Common myeloid progenitor, CD34-positive (primary cell): ENCODE measurements at regions of chr15 and their contacts with region 1.

Region 1: GRCh38 chr15:68192804-68193486 is 12.2 kb downstream of the CALML4 start:
- DNase-seq: no peak
- H3K4me3 ChIP-seq: no peak overlapping the region
- H3K27ac ChIP-seq: peak overlapping the region in 1 of 2 experiments; percentile 30
- H3K4me1 ChIP-seq: no peaks in the 10 kb centered on the region
- H3K27me3 ChIP-seq: no peaks in the 10 kb centered on the region

Region 2: DNA sequence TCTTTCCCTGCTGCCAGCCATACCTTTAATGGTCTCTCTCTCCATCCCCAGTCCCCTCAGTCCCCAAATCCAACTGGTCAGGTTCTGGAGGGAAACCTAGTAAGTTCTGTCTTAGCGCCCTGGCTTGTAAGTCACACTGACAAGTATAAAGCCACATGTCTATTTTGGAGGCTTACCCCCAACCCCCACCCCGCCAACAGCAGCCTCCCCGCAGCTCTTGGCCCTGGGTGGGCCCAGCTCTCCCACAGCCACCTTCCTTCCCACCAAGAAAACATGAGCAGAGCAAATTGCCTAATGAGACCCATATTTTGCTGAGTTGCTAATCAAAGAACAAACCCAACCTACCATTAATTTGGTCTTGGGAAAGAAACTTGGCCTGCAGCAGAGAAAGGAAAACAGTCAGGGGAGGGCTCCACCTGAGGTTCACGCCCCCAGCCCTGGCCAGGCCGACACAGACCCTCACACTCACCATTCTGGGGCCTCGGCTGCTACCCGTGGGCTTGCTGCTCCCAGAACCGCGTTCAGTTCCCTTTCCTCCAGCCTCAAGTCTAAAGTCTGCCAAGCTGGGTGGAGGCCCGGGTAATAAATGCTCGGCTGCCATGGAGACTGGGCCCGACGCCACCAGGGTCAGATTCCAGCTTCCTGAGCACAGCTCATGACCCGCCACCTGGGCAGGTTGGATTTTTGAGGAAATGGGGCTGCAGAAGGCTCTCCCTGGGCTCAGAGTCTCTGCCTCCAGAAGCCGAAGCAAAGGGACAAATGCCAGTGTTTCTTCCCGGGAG is 12.0 kb after region 1 on chr15 and contains the start of gene CALML4:
- CTCF ChIA-PET with region 1: interaction called, 10 read pairs
- POLR2A ChIA-PET with region 1: no interaction called
- DNase-seq: peak in 2 of 3 donors; percentile 58 to 67
- H3K4me3 ChIP-seq: peak within 1 kb of the TSS in 6 of 7 experiments; percentile 19 to 61 (median 42)
- H3K27ac ChIP-seq: peak within 1 kb of the TSS in 1 of 2 experiments; percentile 58
- H3K4me1 ChIP-seq: peaks cover 5 to 58% (median 53%) of the 10 kb centered on the region in 4 experiments
- H3K27me3 ChIP-seq: no peaks in the 10 kb centered on the region